ENCODE measurements at regions of chr19 and their contacts with region 1.

Region 1: DNA sequence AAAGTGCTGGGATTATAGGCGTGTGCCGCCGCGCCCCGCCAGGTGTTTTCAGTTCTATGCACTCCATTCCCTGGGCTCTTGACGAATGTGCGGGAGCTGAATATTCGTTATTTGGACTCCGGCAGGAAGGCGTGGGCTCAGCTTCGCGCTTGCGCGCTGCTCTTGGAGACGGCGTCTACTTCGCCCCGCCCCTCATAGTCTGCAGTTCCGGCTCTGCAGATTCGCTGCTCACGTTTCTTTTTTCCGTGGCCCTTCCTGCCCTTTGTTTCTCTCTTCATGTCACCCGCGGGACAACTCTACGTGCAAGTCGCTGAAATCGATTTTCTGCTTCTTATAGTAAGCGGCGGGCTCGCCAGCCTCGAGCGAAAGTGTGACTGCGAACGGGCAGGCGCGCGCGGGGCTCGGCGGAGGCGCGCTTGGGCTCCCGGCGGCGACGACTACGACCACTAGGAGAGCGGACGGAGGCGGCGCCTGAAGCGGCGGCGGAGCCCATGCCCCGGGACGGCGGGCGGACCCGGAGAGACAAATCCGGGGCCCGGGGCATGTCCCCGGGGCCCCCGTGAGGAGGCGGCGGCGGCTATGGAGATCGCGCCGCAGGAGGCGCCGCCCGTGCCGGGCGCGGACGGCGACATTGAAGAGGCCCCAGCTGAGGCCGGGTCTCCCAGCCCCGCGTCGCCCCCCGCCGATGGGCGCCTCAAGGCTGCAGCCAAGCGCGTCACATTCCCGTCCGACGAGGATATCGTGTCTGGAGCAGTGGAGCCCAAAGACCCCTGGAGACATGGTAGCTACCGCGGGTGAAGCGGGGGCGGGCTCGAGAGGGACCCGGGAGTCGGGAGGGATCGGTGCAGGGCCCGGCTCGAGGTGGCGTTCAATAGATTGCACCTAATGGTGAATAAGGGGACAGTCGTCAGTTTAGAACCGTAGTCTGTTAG is at the start of gene PPP1R37:
- DNase-seq: peak; percentile 97
- ATAC-seq: peak; percentile 67
- H3K4me3 ChIP-seq: peak within 1 kb of the TSS; percentile 79 to 93 (median 91)
- H3K4me3 Mint-ChIP-seq: peak within 1 kb of the TSS; percentile 95
- H3K27ac ChIP-seq: peak within 1 kb of the TSS; percentile 81 to 98
- H3K27ac Mint-ChIP-seq: peak within 1 kb of the TSS; percentile 99
- H3K4me1 ChIP-seq: peaks cover 22 to 44% of the 10 kb centered on the region in 2 donors
- H3K4me1 Mint-ChIP-seq: peaks cover 62% of the 10 kb centered on the region
- H3K27me3 ChIP-seq: no peaks in the 10 kb centered on the region
- H3K27me3 Mint-ChIP-seq: no peaks in the 10 kb centered on the region
- CTCF ChIP-seq: peak; percentile 52
- total RNA-seq, gene PPP1R37: 28.1 and 37.3 TPM in 2 replicates

Region 2: DNA sequence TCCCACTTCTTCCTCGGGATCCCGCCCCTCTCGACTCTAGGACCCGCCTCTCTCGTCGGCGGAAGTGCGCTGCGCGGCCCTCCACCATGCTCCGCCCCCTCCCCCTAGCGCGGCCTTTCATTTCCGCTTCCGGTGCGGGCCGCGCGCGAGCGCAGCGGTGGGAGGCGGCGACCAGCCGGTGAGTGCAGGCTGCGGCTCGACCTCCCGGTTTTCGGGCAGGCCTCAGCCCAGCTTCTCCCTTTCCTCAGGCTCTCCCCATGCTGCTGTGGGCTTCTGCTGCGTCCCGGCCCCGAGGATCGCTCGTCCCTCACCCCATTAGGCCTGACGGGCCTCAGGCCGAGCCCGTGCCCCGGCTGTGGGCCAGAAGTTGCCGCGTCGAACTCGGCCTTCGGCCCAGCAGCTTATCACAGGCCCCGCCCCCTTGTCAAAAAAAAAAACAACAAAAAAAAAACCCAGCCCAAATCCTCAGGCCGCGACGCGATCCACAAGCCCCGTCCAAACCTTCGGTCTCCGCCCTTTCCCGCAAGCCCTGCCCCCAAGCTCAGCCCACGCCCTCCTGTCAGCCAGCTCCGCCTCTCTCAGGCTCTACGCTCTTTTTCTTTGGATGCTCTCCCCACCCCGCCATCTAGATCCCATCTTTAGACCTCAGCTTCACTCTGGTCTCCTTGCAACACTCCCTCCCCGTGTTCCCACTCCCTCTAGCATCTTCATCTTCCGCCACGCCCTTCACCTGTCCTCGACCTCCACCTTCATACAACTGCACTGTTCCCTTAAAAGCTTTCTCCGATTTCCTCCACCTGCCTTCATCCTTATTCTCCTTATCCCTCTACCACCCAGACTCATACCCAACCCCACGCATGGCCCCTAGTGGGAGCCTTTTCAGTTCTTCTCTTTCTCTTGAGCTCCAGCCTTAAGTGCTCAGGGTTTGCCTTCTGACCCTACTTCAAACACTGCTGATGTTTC is 53.8 kb before region 1 on chr19 and contains the start of gene CLASRP:
- CTCF ChIA-PET with region 1: interaction called, 4 read pairs
- POLR2A ChIA-PET with region 1: interaction called, 7 read pairs
- intact Hi-C with region 1: loop called (anchors 5 kb)
- DNase-seq: peak; percentile 93
- ATAC-seq: peak; percentile 89
- H3K4me3 ChIP-seq: peak within 1 kb of the TSS; percentile 51 to 96 (median 94)
- H3K4me3 Mint-ChIP-seq: peak within 1 kb of the TSS; percentile 96
- H3K27ac ChIP-seq: peak within 1 kb of the TSS; percentile 93 to 96
- H3K27ac Mint-ChIP-seq: peak within 1 kb of the TSS; percentile 96
- H3K4me1 ChIP-seq: peaks cover 26 to 35% of the 10 kb centered on the region in 2 donors
- H3K4me1 Mint-ChIP-seq: peaks cover 40% of the 10 kb centered on the region
- H3K27me3 ChIP-seq: no peaks in the 10 kb centered on the region
- H3K27me3 Mint-ChIP-seq: no peaks in the 10 kb centered on the region
- CTCF ChIP-seq: no peak
- total RNA-seq, gene CLASRP: 277 and 285 TPM in 2 replicates

Region 3: GRCh38 chr19:45125926-45126493 is 33.0 kb after region 1 on chr19:
- CTCF ChIA-PET with region 1: interaction called, 13 read pairs
- POLR2A ChIA-PET with region 1: no interaction called
- intact Hi-C with region 1: loop called (anchors 5 kb)
- DNase-seq: peak; percentile 71
- ATAC-seq: peak; percentile 78
- H3K4me3 ChIP-seq: no peak overlapping the region
- H3K4me3 Mint-ChIP-seq: no peak overlapping the region
- H3K27ac ChIP-seq: no peak overlapping the region
- H3K27ac Mint-ChIP-seq: no peak overlapping the region
- H3K4me1 ChIP-seq: peaks cover 16 to 26% of the 10 kb centered on the region in 2 donors
- H3K4me1 Mint-ChIP-seq: peaks cover 43% of the 10 kb centered on the region
- H3K27me3 ChIP-seq: no peaks in the 10 kb centered on the region
- H3K27me3 Mint-ChIP-seq: no peaks in the 10 kb centered on the region
- CTCF ChIP-seq: peak; percentile 76

Region 4: GRCh38 chr19:45178262-45179071 is 85.5 kb after region 1 on chr19 and contains the start of gene BLOC1S3:
- CTCF ChIA-PET with region 1: interaction called, 11 read pairs
- POLR2A ChIA-PET with region 1: interaction called, 7 read pairs
- intact Hi-C with region 1: loop called (anchors 1 kb)
- DNase-seq: peak; percentile 100
- ATAC-seq: peak; percentile 88
- H3K4me3 ChIP-seq: peak within 1 kb of the TSS; percentile 93 to 99 (median 95)
- H3K4me3 Mint-ChIP-seq: peak within 1 kb of the TSS; percentile 95
- H3K27ac ChIP-seq: peak within 1 kb of the TSS; percentile 86 to 91
- H3K27ac Mint-ChIP-seq: peak within 1 kb of the TSS; percentile 96
- H3K4me1 ChIP-seq: peaks cover 24 to 35% of the 10 kb centered on the region in 2 donors
- H3K4me1 Mint-ChIP-seq: peaks cover 39% of the 10 kb centered on the region
- H3K27me3 ChIP-seq: no peaks in the 10 kb centered on the region
- H3K27me3 Mint-ChIP-seq: no peaks in the 10 kb centered on the region
- CTCF ChIP-seq: peak; percentile 38
- total RNA-seq, gene BLOC1S3: 21.1 and 31.8 TPM in 2 replicates